ENCODE measurements at regions of chr19 and their contacts with region 1.

Region 1: GRCh38 chr19:46030812-46031550 is 8.1 kb upstream of the PGLYRP1 start:
- DNase-seq: no peak
- H3K4me3 Mint-ChIP-seq: no peak overlapping the region
- H3K27ac Mint-ChIP-seq: no peak overlapping the region
- H3K4me1 Mint-ChIP-seq: peaks cover 10% of the 10 kb centered on the region
- H3K27me3 Mint-ChIP-seq: peaks cover 13% of the 10 kb centered on the region

Region 2: DNA sequence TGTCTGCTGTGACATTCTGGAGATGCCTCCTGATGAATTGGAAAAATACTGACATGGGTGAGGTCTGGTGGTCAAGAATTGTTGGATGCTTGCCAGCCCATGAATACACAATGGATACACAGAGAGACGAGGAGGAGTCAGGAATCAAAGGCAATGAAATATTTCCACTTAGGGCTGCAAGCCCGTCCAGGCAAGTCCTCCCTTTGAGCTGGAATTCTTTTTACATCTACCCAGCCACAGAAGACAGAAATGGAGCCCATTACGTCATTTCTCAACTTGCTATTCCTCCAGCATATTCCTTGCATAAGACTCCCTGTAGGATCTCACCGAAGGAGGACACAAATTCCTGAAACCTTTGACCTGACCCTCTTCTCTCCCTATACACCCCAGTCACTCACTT is 25.6 kb after region 1 on chr19:
- CTCF ChIA-PET with region 1: interaction called, 10 read pairs
- POLR2A ChIA-PET with region 1: no interaction called
- intact Hi-C with region 1: no loop called
- DNase-seq: no peak
- H3K4me3 Mint-ChIP-seq: no peak overlapping the region
- H3K27ac Mint-ChIP-seq: no peak overlapping the region
- H3K4me1 Mint-ChIP-seq: no peaks in the 10 kb centered on the region
- H3K27me3 Mint-ChIP-seq: peaks cover 30% of the 10 kb centered on the region

Region 3: GRCh38 chr19:46192992-46193650 is 162.1 kb after region 1 on chr19:
- CTCF ChIA-PET with region 1: interaction called, 44 read pairs
- POLR2A ChIA-PET with region 1: no interaction called
- intact Hi-C with region 1: loop called (anchors 1 kb)
- DNase-seq: peak; percentile 47
- H3K4me3 Mint-ChIP-seq: no peak overlapping the region
- H3K27ac Mint-ChIP-seq: no peak overlapping the region
- H3K4me1 Mint-ChIP-seq: peaks cover 2% of the 10 kb centered on the region
- H3K27me3 Mint-ChIP-seq: peaks cover 57% of the 10 kb centered on the region

Region 4: DNA sequence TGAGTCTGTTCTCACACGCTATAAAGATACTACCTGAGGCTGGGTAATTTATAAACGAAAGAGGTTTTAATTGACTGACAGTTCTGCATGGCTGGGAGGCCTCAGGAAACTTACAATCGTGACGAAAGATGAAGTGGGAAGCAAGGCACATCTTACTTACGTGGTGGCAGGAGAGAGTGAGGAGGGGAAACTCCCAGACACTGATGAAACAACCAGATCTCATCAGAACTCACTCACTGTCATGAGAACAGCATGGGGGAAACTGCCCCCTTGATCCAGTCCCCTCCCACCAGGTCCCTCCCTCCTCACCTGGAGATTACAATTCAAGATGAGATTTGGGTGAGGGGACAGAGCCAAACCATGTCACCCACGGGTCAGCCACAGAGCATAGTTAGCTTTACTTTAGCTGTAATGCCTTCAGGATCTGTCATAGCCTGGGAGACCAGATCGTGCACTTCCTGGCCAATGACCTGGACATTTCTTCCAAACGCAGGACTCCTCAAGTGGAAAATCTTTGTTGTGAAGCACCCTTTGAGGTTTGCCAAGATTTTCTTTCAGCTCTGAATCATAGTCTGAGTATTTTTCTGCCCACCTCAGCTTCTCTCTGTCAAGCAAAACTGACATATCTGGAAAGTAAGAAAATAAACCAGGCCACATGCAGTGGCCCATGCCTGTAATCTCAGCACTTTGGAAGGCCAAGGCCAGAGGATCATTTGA is 240.7 kb after region 1 on chr19:
- CTCF ChIA-PET with region 1: interaction called, 116 read pairs
- POLR2A ChIA-PET with region 1: no interaction called
- intact Hi-C with region 1: no loop called
- DNase-seq: peak; percentile 20
- H3K4me3 Mint-ChIP-seq: no peak overlapping the region
- H3K27ac Mint-ChIP-seq: no peak overlapping the region
- H3K4me1 Mint-ChIP-seq: peaks cover 7% of the 10 kb centered on the region
- H3K27me3 Mint-ChIP-seq: peaks cover 44% of the 10 kb centered on the region